ENCODE measurements at regions of chr11 and their contacts with region 1.

Region 1: GRCh38 chr11:17354601-17354991 is 3.0 kb downstream of the NCR3LG1 start:
- DNase-seq: peak in 1 of 2 donors; percentile 77
- H3K4me3 ChIP-seq: no peak overlapping the region
- CTCF ChIP-seq: no peak
- POLR2A ChIP-seq: no peak

Region 2: GRCh38 chr11:17145972-17146371 is 208.6 kb before region 1 on chr11:
- intact Hi-C with region 1: no loop called
- DNase-seq: no peak
- H3K4me3 ChIP-seq: no peak overlapping the region
- CTCF ChIP-seq: no peak
- POLR2A ChIP-seq: no peak

Region 3: DNA sequence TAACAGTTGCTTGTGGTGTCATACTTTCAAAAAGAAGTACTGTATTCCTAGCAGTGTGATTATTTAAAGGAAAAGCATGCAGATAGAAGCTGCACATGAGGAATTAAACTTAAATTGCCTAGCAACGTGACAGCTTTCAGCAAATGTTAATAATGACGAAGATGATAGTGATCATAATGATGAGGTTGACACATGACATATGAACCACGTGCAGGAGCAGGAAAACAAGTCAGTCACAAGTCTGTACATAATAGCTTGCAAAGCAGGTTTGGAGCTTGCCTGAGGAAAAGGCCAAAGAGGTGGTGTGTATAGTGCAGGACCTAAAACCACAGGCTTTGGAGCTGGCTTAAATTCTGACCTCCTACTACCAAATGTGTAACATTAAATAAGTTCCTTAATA is 116.2 kb before region 1 on chr11:
- intact Hi-C with region 1: loop called (anchors 5 kb)
- DNase-seq: peak in 1 of 2 donors; percentile 44
- H3K4me3 ChIP-seq: no peak overlapping the region
- CTCF ChIP-seq: no peak
- POLR2A ChIP-seq: no peak

Region 4: DNA sequence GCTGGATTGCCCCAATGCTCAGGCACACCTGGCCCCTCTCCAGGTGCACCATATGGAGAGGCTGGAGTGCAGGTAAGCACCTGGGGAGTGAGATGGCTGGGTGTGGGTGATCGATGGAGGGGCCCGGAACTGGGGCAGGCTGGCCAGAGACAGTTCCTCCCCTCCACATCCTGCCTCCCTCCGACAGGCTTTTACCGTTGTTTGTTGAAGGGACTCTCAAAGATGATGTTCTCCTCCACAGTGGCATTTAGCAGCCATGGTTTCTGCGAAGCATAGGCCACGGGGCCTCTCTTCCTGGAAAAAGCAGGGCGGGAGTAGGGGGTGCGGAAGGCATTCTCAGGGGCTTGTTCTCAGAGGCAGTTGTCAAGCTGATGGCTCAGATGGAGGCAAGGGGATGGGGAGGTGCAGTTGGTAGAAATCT is 59.7 kb after region 1 on chr11:
- intact Hi-C with region 1: no loop called
- DNase-seq: no peak
- H3K4me3 ChIP-seq: no peak overlapping the region
- CTCF ChIP-seq: no peak
- POLR2A ChIP-seq: no peak